ENCODE measurements at regions of chr9 and their contacts with region 1.

Region 1: GRCh38 chr9:101527066-101527465 is 6.6 kb upstream of the RNF20 start:
- DNase-seq: no peak
- ATAC-seq: no peak
- H3K4me3 ChIP-seq: no peak overlapping the region
- H3K27ac ChIP-seq: no peak overlapping the region
- H3K4me1 ChIP-seq: no peaks in the 10 kb centered on the region
- H3K27me3 ChIP-seq: peaks cover 11% of the 10 kb centered on the region
- CTCF ChIP-seq: no peak

Region 2: GRCh38 chr9:101458955-101459631 is 68.0 kb before region 1 on chr9:
- intact Hi-C with region 1: loop called (anchors 5 kb)
- DNase-seq: no peak
- ATAC-seq: peak; percentile 96
- H3K4me3 ChIP-seq: no peak overlapping the region
- H3K27ac ChIP-seq: no peak overlapping the region
- H3K4me1 ChIP-seq: no peaks in the 10 kb centered on the region
- H3K27me3 ChIP-seq: peaks cover 4% of the 10 kb centered on the region
- CTCF ChIP-seq: peak; percentile 70

Region 3: DNA sequence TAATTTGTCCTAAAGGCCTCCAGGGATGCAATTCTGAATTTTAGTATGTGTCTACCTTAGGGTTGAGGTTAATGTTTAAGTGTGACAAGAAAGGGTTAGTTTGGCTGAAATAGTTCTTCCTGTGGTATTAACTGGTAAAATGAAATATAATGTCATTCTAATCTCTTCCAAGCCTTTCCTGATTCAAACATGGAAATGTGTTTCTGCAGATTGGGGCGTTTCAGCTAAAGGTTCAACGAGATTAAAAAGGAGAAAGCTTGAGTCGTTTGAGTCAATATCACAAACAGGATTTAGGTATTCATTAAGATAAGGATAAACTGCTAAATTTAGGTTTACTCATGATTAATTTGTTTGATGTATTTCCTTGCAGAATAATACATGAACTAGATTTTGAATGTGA is 57.0 kb before region 1 on chr9:
- intact Hi-C with region 1: no loop called
- DNase-seq: no peak
- ATAC-seq: no peak
- H3K4me3 ChIP-seq: no peak overlapping the region
- H3K27ac ChIP-seq: no peak overlapping the region
- H3K4me1 ChIP-seq: no peaks in the 10 kb centered on the region
- H3K27me3 ChIP-seq: peaks cover 6% of the 10 kb centered on the region
- CTCF ChIP-seq: no peak